ENCODE measurements at regions of chr3 and their contacts with region 1.

Region 1: GRCh38 chr3:14947886-14948555 is 638 bp downstream of the NR2C2 start:
- DNase-seq: peak; percentile 97
- H3K4me3 ChIP-seq: peak overlapping the region; percentile 67
- H3K27ac ChIP-seq: peak overlapping the region; percentile 99
- H3K4me1 ChIP-seq: peaks cover 20% of the 10 kb centered on the region
- H3K27me3 ChIP-seq: no peaks in the 10 kb centered on the region
- CTCF ChIP-seq: no peak

Region 2: GRCh38 chr3:14178247-14179113 is 769.5 kb before region 1 on chr3 and contains the starts of genes LSM3 and XPC:
- CTCF ChIA-PET with region 1: no interaction called
- POLR2A ChIA-PET with region 1: no interaction called
- intact Hi-C with region 1: loop called (anchors 10 kb)
- DNase-seq: peak; percentile 99
- H3K4me3 ChIP-seq: peak within 1 kb of the TSS; percentile 62
- H3K27ac ChIP-seq: peak within 1 kb of the TSS; percentile 94
- H3K4me1 ChIP-seq: peaks cover 16% of the 10 kb centered on the region
- H3K27me3 ChIP-seq: no peaks in the 10 kb centered on the region
- CTCF ChIP-seq: no peak
- total RNA-seq, gene LSM3: 24.3 and 29.4 TPM in 2 replicates
- total RNA-seq, gene XPC: 57.2 and 58.2 TPM in 2 replicates

Region 3: GRCh38 chr3:15098503-15099363 is 150.7 kb after region 1 on chr3 and contains the start of gene RBSN:
- CTCF ChIA-PET with region 1: no interaction called
- POLR2A ChIA-PET with region 1: no interaction called
- intact Hi-C with region 1: loop called (anchors 2 kb)
- DNase-seq: peak; percentile 98
- H3K4me3 ChIP-seq: peak within 1 kb of the TSS; percentile 93
- H3K27ac ChIP-seq: peak within 1 kb of the TSS; percentile 80
- H3K4me1 ChIP-seq: peaks cover 6% of the 10 kb centered on the region
- H3K27me3 ChIP-seq: no peaks in the 10 kb centered on the region
- CTCF ChIP-seq: no peak
- total RNA-seq, gene RBSN: 31.2 and 35.2 TPM in 2 replicates

Measured in A673 (cell line).